AG04450 (cell line): ENCODE measurements at regions of chr11 and their contacts with region 1.

Region 1: GRCh38 chr11:122505304-122506006 is 150.1 kb upstream of the UBASH3B start:
- DNase-seq: peak; percentile 81
- H3K4me3 ChIP-seq: no peak overlapping the region
- H3K27ac ChIP-seq: no peak overlapping the region
- H3K27me3 ChIP-seq: no peaks in the 10 kb centered on the region
- CTCF ChIP-seq: peak; percentile 90

Region 2: GRCh38 chr11:121591405-121592033 is 913.9 kb before region 1 on chr11:
- CTCF ChIA-PET with region 1: interaction called, 15 read pairs
- POLR2A ChIA-PET with region 1: no interaction called
- DNase-seq: peak; percentile 63
- H3K4me3 ChIP-seq: no peak overlapping the region
- H3K27ac ChIP-seq: no peak overlapping the region
- H3K27me3 ChIP-seq: no peaks in the 10 kb centered on the region
- CTCF ChIP-seq: peak; percentile 89

Region 3: DNA sequence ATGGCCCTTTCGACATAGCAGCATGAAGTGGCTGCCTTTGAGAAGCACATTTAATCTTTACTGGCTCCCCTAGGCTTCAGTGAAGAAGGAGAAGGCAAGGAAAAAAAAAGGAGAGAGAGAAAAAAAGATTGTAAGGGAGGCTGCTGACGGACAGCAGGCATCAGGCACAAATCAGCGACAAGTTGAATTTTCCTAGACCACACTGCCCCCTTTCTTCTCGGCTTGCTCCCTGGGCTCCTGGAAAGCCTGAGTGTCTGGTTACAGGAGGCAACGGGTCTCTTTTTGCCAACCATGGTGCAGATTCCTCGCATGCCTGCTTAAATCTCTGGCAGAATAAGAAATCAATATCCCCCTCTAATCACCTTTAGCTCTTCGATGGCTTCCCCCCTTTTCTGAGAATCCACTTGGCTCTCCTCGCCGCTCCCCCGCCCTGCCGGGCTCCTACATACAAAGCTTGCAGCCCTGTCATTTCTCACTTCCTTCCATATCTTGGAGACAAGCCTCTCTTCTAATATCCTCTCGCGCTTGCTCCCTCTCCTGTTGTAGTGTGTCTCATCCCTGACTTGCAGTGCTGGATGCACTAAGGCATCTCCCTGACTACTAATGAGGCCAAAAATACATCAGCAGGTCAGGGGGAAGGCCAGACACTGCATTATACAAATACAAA is 403.7 kb before region 1 on chr11:
- CTCF ChIA-PET with region 1: interaction called, 14 read pairs
- POLR2A ChIA-PET with region 1: no interaction called
- DNase-seq: peak; percentile 53
- H3K4me3 ChIP-seq: peak overlapping the region; percentile 79
- H3K27ac ChIP-seq: peak overlapping the region; percentile 86
- H3K27me3 ChIP-seq: no peaks in the 10 kb centered on the region
- CTCF ChIP-seq: peak; percentile 68

Region 4: GRCh38 chr11:122215244-122215992 is 290.0 kb before region 1 on chr11:
- CTCF ChIA-PET with region 1: interaction called, 58 read pairs
- POLR2A ChIA-PET with region 1: interaction called, 6 read pairs
- DNase-seq: peak; percentile 94
- H3K4me3 ChIP-seq: no peak overlapping the region
- H3K27ac ChIP-seq: peak overlapping the region; percentile 77
- H3K27me3 ChIP-seq: no peaks in the 10 kb centered on the region
- CTCF ChIP-seq: peak; percentile 94

Region 5: GRCh38 chr11:122517403-122518379 is 12.2 kb after region 1 on chr11:
- CTCF ChIA-PET with region 1: interaction called, 11 read pairs
- POLR2A ChIA-PET with region 1: no interaction called
- DNase-seq: no peak
- H3K4me3 ChIP-seq: no peak overlapping the region
- H3K27ac ChIP-seq: no peak overlapping the region
- H3K27me3 ChIP-seq: peaks cover 11% of the 10 kb centered on the region
- CTCF ChIP-seq: no peak

Region 6: GRCh38 chr11:123264431-123264780 is 759.0 kb after region 1 on chr11:
- CTCF ChIA-PET with region 1: no interaction called
- POLR2A ChIA-PET with region 1: no interaction called
- DNase-seq: no peak
- H3K4me3 ChIP-seq: no peak overlapping the region
- H3K27ac ChIP-seq: no peak overlapping the region
- H3K27me3 ChIP-seq: peaks cover 14% of the 10 kb centered on the region
- CTCF ChIP-seq: no peak